Cardiac septum (tissue), 1 donor: ENCODE measurements at regions of chr7 and their contacts with region 1.

Region 1: GRCh38 chr7:32891800-32892520 is 400 bp upstream of the KBTBD2 start:
- DNase-seq: peak; percentile 99

Region 2: DNA sequence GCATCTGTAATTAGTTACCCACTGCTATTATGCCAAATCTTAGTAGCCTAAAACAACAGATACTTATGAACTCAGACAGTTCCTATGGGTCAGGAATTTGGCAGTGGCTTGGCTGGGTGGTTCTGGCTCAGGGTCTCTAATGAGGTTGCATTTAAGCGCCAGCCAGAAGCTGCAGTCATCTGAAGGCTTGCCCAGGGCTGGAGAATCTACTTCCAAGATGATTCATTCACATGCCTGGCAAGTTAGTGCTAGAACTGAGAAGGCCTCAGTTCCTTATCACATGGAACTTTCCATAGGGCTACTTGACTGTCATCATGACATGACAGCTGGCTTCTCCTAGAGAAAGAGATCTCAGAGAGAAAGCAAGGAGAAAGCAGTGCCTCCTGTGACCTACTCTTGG is 275.3 kb before region 1 on chr7:
- intact Hi-C with region 1: no loop called
- DNase-seq: no peak

Region 3: GRCh38 chr7:32803406-32804141 is 88.4 kb before region 1 on chr7:
- intact Hi-C with region 1: no loop called
- DNase-seq: no peak

Region 4: DNA sequence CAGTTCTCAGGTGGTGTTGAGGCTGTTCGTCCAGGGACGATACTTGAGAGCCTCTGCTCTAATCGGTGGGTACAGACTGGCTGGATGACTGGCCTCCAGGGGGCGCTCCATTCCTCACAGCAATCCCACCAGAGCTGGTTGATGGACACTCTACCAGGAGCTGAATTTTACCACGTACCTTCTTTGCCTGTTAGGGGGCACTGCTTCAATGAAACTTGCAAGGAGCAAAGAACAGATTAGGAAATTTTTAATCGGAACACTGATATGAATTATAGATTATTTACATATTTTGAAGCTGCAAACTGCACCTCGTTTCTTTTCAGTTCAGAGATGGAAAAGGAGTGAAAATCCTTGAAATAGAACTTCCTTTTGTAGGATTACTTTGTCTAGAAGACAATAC is 45.3 kb before region 1 on chr7:
- intact Hi-C with region 1: loop called (anchors 5 kb)
- DNase-seq: peak; percentile 94

Region 5: GRCh38 chr7:32957326-32958045 is 65.5 kb after region 1 on chr7 and contains the start of gene FKBP9:
- intact Hi-C with region 1: loop called (anchors 1 kb)
- DNase-seq: peak; percentile 94
- total RNA-seq, gene FKBP9: 137 TPM

Region 6: DNA sequence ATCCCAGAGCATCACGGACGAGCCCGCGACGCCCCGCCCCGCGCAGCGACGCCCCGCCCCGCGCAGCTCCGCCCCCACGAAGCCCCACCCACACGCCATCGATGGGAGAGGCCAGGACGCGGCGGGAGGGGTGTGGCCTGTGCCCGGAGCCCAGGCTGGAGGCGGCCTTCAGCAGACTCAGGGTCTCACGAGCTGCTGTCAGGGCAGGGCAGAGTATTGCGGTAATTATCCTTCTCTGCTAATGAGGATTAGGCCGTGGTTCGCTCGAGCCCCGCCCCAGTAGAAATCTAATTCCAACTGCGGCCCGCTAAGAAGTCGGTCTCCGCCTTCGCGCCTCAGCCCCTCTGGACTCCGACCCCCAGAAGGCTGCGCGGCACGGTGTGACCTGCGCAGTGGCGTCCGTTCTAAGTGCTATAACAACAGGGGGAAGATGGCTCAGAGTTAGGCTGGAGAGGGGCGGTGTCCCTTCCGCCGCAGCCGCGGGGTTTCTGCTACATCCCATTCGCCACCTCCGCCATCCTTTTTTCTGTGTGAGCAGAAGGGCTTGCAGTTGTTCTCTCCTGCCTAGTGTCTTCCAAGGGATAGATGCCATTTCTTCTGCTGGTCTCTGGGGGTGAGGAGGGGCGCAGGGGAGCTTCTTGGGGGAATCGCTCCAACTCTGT is 171.0 kb after region 1 on chr7:
- intact Hi-C with region 1: loop called (anchors 5 kb)
- DNase-seq: peak; percentile 98